Naive thymus-derived CD4-positive, alpha-beta T cell (primary cell): ENCODE measurements at regions of chr11 and their contacts with region 1.

Region 1: GRCh38 chr11:125111343-125112207 is at the start of gene TMEM218:
- DNase-seq: peak; percentile 81 to 97 (median 93)
- ATAC-seq: peak; percentile 97
- H3K4me3 ChIP-seq: peak within 1 kb of the TSS; percentile 81
- H3K4me3 Mint-ChIP-seq: peak within 1 kb of the TSS; percentile 91 to 100 (median 96)
- H3K27ac ChIP-seq: peak within 1 kb of the TSS; percentile 77
- H3K27ac Mint-ChIP-seq: peak within 1 kb of the TSS; percentile 91 to 97 (median 94)
- H3K4me1 ChIP-seq: peaks cover 0 to 8% of the 10 kb centered on the region in 2 donors
- H3K4me1 Mint-ChIP-seq: peaks cover 0 to 33% (median 22%) of the 10 kb centered on the region in 7 donors
- H3K27me3 ChIP-seq: no peaks in the 10 kb centered on the region
- H3K27me3 Mint-ChIP-seq: peaks cover 0 to 2% (median 0%) of the 10 kb centered on the region in 5 donors
- total RNA-seq, gene TMEM218: 10.2 to 18.5 (median 13.9) TPM

Region 2: DNA sequence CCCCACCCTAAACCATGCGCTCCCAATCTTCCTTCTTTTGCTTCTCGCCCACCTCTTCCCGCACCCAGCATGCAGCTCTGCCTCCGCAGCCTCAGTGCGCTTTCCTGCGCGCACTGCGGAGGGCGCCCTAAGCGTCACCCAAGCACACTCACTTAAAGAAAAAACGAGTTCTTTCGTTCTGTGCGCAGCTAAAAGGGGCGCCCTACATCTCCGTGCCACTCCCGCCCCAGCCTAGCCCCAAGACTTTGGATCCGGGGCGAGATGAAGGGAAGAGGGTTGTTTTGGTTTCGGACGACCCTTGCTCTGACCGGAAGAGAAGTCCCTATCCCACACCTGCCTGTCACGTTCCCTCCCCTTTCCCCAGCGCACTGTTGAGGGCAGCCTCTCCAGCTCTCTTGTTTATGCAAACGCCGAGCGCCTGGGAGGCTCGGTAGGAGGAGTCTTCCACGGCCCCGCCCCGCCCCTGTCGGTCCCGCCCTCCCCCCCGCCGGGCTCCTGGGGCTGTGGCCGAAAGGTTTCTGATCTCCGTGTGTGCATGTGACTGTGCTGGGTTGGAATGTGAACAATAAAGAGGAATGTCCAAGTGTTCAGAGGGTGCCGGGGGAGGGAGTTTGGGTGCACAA is 364.8 kb before region 1 on chr11:
- CTCF ChIA-PET with region 1: no interaction called
- POLR2A ChIA-PET with region 1: interaction called, 4 read pairs
- intact Hi-C with region 1: loop called (anchors 5 kb)
- DNase-seq: peak; percentile 66 to 88 (median 85)
- ATAC-seq: peak; percentile 93
- H3K4me3 ChIP-seq: peak overlapping the region; percentile 99
- H3K4me3 Mint-ChIP-seq: peak overlapping the region; percentile 91 to 100 (median 98)
- H3K27ac ChIP-seq: peak overlapping the region; percentile 72
- H3K27ac Mint-ChIP-seq: peak overlapping the region; percentile 91 to 98 (median 96)
- H3K4me1 ChIP-seq: peaks cover 0 to 3% of the 10 kb centered on the region in 2 donors
- H3K4me1 Mint-ChIP-seq: peaks cover 4 to 37% (median 19%) of the 10 kb centered on the region in 7 donors
- H3K27me3 ChIP-seq: no peaks in the 10 kb centered on the region
- H3K27me3 Mint-ChIP-seq: peaks cover 0 to 22% (median 0%) of the 10 kb centered on the region in 5 donors

Region 3: GRCh38 chr11:124920870-124921609 is 190.5 kb before region 1 on chr11:
- CTCF ChIA-PET with region 1: no interaction called
- POLR2A ChIA-PET with region 1: interaction called, 5 read pairs
- intact Hi-C with region 1: loop called in 1 of 2 experiments (anchors 1 kb)
- DNase-seq: peak; percentile 61 to 86 (median 78)
- ATAC-seq: peak; percentile 81
- H3K4me3 ChIP-seq: peak overlapping the region; percentile 46
- H3K4me3 Mint-ChIP-seq: peak overlapping the region; percentile 65 to 85 (median 80)
- H3K27ac ChIP-seq: peak overlapping the region; percentile 47
- H3K27ac Mint-ChIP-seq: peak overlapping the region in 8 of 9 donors; percentile 32 to 85 (median 62)
- H3K4me1 ChIP-seq: peaks cover 0 to 21% of the 10 kb centered on the region in 2 donors
- H3K4me1 Mint-ChIP-seq: peaks cover 8 to 46% (median 40%) of the 10 kb centered on the region in 7 donors
- H3K27me3 ChIP-seq: no peaks in the 10 kb centered on the region
- H3K27me3 Mint-ChIP-seq: peaks cover 0 to 12% (median 0%) of the 10 kb centered on the region in 5 donors

Region 4: GRCh38 chr11:125164422-125165110 is 53.0 kb after region 1 on chr11 and contains the start of gene PKNOX2:
- CTCF ChIA-PET with region 1: no interaction called
- POLR2A ChIA-PET with region 1: no interaction called
- intact Hi-C with region 1: loop called in 1 of 2 experiments (anchors 1 kb)
- DNase-seq: peak; percentile 30 to 70 (median 53)
- ATAC-seq: peak; percentile 80
- H3K4me3 ChIP-seq: peak within 1 kb of the TSS; percentile 63
- H3K4me3 Mint-ChIP-seq: peak within 1 kb of the TSS; percentile 88 to 97 (median 94)
- H3K27ac ChIP-seq: no peak within 1 kb of the TSS
- H3K27ac Mint-ChIP-seq: peak within 1 kb of the TSS in 7 of 9 donors; percentile 28 to 78 (median 61)
- H3K4me1 ChIP-seq: peaks cover 12 to 17% of the 10 kb centered on the region in 2 donors
- H3K4me1 Mint-ChIP-seq: peaks cover 15 to 23% (median 18%) of the 10 kb centered on the region in 7 donors
- H3K27me3 ChIP-seq: peaks cover 7 to 24% of the 10 kb centered on the region in 2 donors
- H3K27me3 Mint-ChIP-seq: peaks cover 42 to 84% (median 55%) of the 10 kb centered on the region in 5 donors
- total RNA-seq, gene PKNOX2: not detected

Region 5: GRCh38 chr11:125797641-125798040 is 686.1 kb after region 1 on chr11:
- CTCF ChIA-PET with region 1: no interaction called
- POLR2A ChIA-PET with region 1: no interaction called
- intact Hi-C with region 1: no loop called
- DNase-seq: no peak
- ATAC-seq: no peak
- H3K4me3 ChIP-seq: no peak overlapping the region
- H3K4me3 Mint-ChIP-seq: no peak overlapping the region
- H3K27ac ChIP-seq: no peak overlapping the region
- H3K27ac Mint-ChIP-seq: no peak overlapping the region
- H3K4me1 ChIP-seq: no peaks in the 10 kb centered on the region
- H3K4me1 Mint-ChIP-seq: no peaks in the 10 kb centered on the region
- H3K27me3 ChIP-seq: no peaks in the 10 kb centered on the region
- H3K27me3 Mint-ChIP-seq: peaks cover 0 to 42% (median 17%) of the 10 kb centered on the region in 5 donors

Region 6: DNA sequence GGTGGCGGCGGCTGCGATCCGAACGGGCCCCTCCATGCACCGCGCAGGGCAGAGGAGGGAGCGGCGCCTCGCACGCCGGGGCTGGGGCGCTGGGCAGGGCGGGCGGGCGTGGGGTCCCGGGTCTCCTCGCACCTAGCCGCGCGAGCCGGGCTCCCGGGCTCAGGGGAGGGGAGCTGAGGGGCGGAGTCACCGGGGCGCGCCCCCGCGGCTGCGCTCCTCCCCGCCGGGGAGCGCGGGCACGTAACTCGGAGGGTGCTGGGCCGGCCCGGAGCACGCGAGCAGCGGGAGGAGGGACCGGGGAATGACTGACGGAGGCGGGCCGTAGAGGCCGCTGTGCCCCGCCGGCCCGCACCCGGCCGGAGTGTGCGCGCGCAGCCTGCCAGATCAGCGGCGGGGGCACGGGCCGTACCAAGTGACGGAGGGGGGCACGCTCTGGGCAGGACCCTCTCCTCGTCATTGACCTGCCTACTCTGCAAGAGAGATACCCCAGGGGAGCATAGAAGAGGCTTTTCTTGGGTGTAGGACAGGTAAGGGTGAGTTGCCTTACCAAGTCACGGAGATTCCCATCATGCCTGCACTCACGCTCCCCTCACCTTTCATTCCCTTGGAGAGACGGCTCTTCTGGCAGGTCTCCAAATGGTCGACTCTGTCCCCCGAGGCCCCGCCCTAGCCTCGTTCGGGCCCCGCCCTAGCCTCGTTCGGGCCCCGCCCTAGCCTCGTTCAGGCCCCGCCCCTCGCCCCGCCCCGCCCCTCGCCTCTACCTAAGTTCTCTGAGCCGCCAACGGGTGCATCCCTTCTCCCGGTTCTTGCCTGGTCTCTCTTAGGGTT is 951.3 kb after region 1 on chr11 and contains the start of gene CDON:
- CTCF ChIA-PET with region 1: no interaction called
- POLR2A ChIA-PET with region 1: no interaction called
- intact Hi-C with region 1: loop called (anchors 2 to 5 kb)
- DNase-seq: peak; percentile 88 to 97 (median 93)
- ATAC-seq: peak; percentile 92
- H3K4me3 ChIP-seq: peak within 1 kb of the TSS; percentile 83
- H3K4me3 Mint-ChIP-seq: peak within 1 kb of the TSS; percentile 79 to 93 (median 92)
- H3K27ac ChIP-seq: peak within 1 kb of the TSS; percentile 76
- H3K27ac Mint-ChIP-seq: peak within 1 kb of the TSS; percentile 79 to 98 (median 97)
- H3K4me1 ChIP-seq: peaks cover 4 to 5% of the 10 kb centered on the region in 2 donors
- H3K4me1 Mint-ChIP-seq: peaks cover 5 to 17% (median 7%) of the 10 kb centered on the region in 7 donors
- H3K27me3 ChIP-seq: no peaks in the 10 kb centered on the region
- H3K27me3 Mint-ChIP-seq: peaks cover 0 to 56% (median 5%) of the 10 kb centered on the region in 5 donors
- total RNA-seq, gene CDON: 1.5 to 4.8 (median 2.3) TPM